CD8-positive, alpha-beta T cell (primary cell): ENCODE measurements at regions of chr14 and their contacts with region 1.

Region 1: GRCh38 chr14:74493343-74494261 is at the start of gene ISCA2:
- DNase-seq: peak; percentile 97 to 100 (median 99)
- ATAC-seq: peak; percentile 91
- H3K4me3 ChIP-seq: peak within 1 kb of the TSS; percentile 78 to 90
- H3K4me3 Mint-ChIP-seq: no peak within 1 kb of the TSS
- H3K27ac ChIP-seq: peak within 1 kb of the TSS; percentile 80 to 81
- H3K27ac Mint-ChIP-seq: peak within 1 kb of the TSS; percentile 92
- H3K4me1 ChIP-seq: peaks cover 32% of the 10 kb centered on the region
- H3K4me1 Mint-ChIP-seq: peaks cover 33% of the 10 kb centered on the region
- H3K27me3 ChIP-seq: no peaks in the 10 kb centered on the region
- H3K27me3 Mint-ChIP-seq: no peaks in the 10 kb centered on the region
- CTCF ChIP-seq: no peak
- total RNA-seq, gene ISCA2: 18.6 to 24.0 TPM

Region 2: GRCh38 chr14:74084277-74085046 is 409.1 kb before region 1 on chr14 and contains the starts of genes ALDH6A1 and LIN52:
- CTCF ChIA-PET with region 1: no interaction called
- POLR2A ChIA-PET with region 1: no interaction called
- intact Hi-C with region 1: loop called (anchors 1 kb)
- DNase-seq: peak; percentile 100
- ATAC-seq: peak; percentile 85
- H3K4me3 ChIP-seq: peak within 1 kb of the TSS; percentile 80 to 90
- H3K4me3 Mint-ChIP-seq: peak within 1 kb of the TSS; percentile 98
- H3K27ac ChIP-seq: peak within 1 kb of the TSS; percentile 70 to 73
- H3K27ac Mint-ChIP-seq: peak within 1 kb of the TSS; percentile 96
- H3K4me1 ChIP-seq: peaks cover 19% of the 10 kb centered on the region
- H3K4me1 Mint-ChIP-seq: peaks cover 33% of the 10 kb centered on the region
- H3K27me3 ChIP-seq: no peaks in the 10 kb centered on the region
- H3K27me3 Mint-ChIP-seq: no peaks in the 10 kb centered on the region
- CTCF ChIP-seq: no peak
- total RNA-seq, gene ALDH6A1: 3.8 to 4.0 TPM
- total RNA-seq, gene LIN52: 6.1 to 6.8 TPM

Region 3: DNA sequence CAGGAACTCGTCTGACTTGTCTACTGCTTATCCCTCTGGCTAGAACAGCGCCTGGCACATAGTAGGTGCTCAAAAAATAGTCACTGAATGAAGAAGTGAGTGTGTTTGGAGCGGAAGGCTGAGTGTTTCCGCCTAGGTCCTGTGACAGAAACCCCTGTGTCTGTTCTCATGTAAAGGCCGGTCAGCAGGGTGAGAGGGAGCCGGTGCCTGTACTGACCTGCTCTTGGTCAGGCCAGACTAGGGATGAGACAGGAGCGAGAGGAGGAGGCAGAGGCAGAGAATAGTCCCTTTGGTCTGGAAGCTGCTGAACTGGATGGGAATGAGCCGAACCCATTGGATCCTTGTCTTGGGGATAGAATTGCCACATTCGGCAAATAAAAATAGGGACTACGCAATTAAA is 124.8 kb before region 1 on chr14:
- CTCF ChIA-PET with region 1: no interaction called
- POLR2A ChIA-PET with region 1: no interaction called
- intact Hi-C with region 1: no loop called
- DNase-seq: no peak
- ATAC-seq: no peak
- H3K4me3 ChIP-seq: no peak overlapping the region
- H3K4me3 Mint-ChIP-seq: no peak overlapping the region
- H3K27ac ChIP-seq: no peak overlapping the region
- H3K27ac Mint-ChIP-seq: no peak overlapping the region
- H3K4me1 ChIP-seq: no peaks in the 10 kb centered on the region
- H3K4me1 Mint-ChIP-seq: no peaks in the 10 kb centered on the region
- H3K27me3 ChIP-seq: no peaks in the 10 kb centered on the region
- H3K27me3 Mint-ChIP-seq: peaks cover 10% of the 10 kb centered on the region
- CTCF ChIP-seq: no peak

Region 4: DNA sequence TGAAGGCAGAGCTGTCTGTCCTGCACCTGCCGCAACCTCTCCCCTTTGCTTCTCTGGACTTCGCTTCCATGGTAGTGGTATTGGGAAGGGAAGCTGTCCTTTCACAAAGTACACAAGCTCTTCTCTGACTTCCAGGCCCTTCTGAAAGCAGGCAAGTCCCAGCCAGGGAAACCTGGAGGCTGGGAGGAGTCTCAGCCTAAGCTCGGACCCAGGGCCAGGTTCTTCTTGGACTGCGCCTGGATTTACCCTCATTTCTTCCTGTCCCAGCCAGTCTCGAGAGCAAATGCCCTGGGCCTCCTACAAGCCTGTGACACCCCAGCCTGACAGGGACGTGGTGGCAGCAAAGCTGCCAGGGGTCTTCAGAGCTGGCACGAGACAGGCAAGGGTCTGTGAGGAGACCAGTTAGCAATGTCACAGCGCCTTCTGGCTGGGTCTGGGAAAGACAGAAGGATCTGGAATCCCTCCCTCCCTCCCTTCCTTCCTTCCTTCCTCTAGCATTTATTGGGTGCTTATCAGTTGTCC is 22.4 kb after region 1 on chr14:
- CTCF ChIA-PET with region 1: no interaction called
- POLR2A ChIA-PET with region 1: no interaction called
- intact Hi-C with region 1: loop called in 1 of 2 experiments (anchors 1 kb)
- DNase-seq: no peak
- ATAC-seq: no peak
- H3K4me3 ChIP-seq: no peak overlapping the region
- H3K4me3 Mint-ChIP-seq: no peak overlapping the region
- H3K27ac ChIP-seq: no peak overlapping the region
- H3K27ac Mint-ChIP-seq: no peak overlapping the region
- H3K4me1 ChIP-seq: peaks cover 9% of the 10 kb centered on the region
- H3K4me1 Mint-ChIP-seq: peaks cover 8% of the 10 kb centered on the region
- H3K27me3 ChIP-seq: no peaks in the 10 kb centered on the region
- H3K27me3 Mint-ChIP-seq: peaks cover 16% of the 10 kb centered on the region
- CTCF ChIP-seq: no peak

Region 5: DNA sequence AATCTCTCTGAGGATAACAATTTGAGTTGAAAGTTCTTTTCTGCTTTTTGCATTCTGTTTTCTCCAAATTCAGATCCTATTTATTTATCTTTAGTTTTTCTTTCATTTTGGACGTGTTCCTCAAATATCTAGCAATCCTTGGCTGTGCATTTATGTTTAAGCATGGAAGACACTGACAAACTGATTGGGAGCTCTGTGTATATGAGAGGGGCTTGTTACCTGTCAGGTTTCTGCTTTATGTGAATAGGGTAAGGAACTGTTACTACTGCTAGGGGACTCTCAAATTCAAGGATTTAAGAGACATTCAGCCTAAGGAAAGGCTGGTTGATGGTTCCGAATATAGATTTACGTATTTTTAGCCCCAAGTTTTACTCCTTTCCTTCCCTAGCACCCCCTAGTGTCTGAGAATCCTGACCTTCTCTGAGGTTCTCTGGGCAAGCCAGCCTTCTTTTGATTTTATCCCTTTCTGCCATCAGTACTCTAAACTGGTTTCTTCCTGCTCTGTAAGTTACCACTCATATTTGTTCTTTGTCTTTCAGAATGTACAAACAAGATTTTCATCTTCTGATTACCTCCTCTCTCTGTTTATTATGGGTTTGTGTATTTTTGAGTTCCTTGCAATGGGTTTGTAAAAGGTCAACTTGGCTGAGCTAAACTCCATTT is 300.0 kb after region 1 on chr14:
- CTCF ChIA-PET with region 1: no interaction called
- POLR2A ChIA-PET with region 1: no interaction called
- intact Hi-C with region 1: loop called in 1 of 2 experiments (anchors 10 kb)
- DNase-seq: peak in 2 of 9 experiments; percentile 36 to 59
- ATAC-seq: peak; percentile 51
- H3K4me3 ChIP-seq: peak overlapping the region in 1 of 2 experiments; percentile 9
- H3K4me3 Mint-ChIP-seq: peak overlapping the region; percentile 70
- H3K27ac ChIP-seq: peak overlapping the region in 1 of 2 experiments; percentile 3
- H3K27ac Mint-ChIP-seq: peak overlapping the region; percentile 89
- H3K4me1 ChIP-seq: peaks cover 28% of the 10 kb centered on the region
- H3K4me1 Mint-ChIP-seq: peaks cover 47% of the 10 kb centered on the region
- H3K27me3 ChIP-seq: no peaks in the 10 kb centered on the region
- H3K27me3 Mint-ChIP-seq: no peaks in the 10 kb centered on the region
- CTCF ChIP-seq: peak; percentile 35

Region 6: GRCh38 chr14:75126679-75127473 is 633.3 kb after region 1 on chr14 and contains the start of gene NEK9:
- CTCF ChIA-PET with region 1: no interaction called
- POLR2A ChIA-PET with region 1: no interaction called
- intact Hi-C with region 1: loop called in 1 of 2 experiments (anchors 10 kb)
- DNase-seq: peak; percentile 77 to 93 (median 89)
- ATAC-seq: peak; percentile 82
- H3K4me3 ChIP-seq: peak within 1 kb of the TSS; percentile 87 to 95
- H3K4me3 Mint-ChIP-seq: peak within 1 kb of the TSS; percentile 95
- H3K27ac ChIP-seq: peak within 1 kb of the TSS; percentile 87 to 92
- H3K27ac Mint-ChIP-seq: peak within 1 kb of the TSS; percentile 98
- H3K4me1 ChIP-seq: peaks cover 23% of the 10 kb centered on the region
- H3K4me1 Mint-ChIP-seq: peaks cover 46% of the 10 kb centered on the region
- H3K27me3 ChIP-seq: no peaks in the 10 kb centered on the region
- H3K27me3 Mint-ChIP-seq: no peaks in the 10 kb centered on the region
- CTCF ChIP-seq: no peak
- total RNA-seq, gene NEK9: 40.7 to 42.9 TPM

Region 7: GRCh38 chr14:76151398-76152339 is 1658.1 kb after region 1 on chr14 and contains the start of gene GPATCH2L:
- CTCF ChIA-PET with region 1: no interaction called
- POLR2A ChIA-PET with region 1: no interaction called
- intact Hi-C with region 1: loop called in 1 of 2 experiments (anchors 10 kb)
- DNase-seq: peak; percentile 95 to 98 (median 97)
- ATAC-seq: peak; percentile 87
- H3K4me3 ChIP-seq: peak within 1 kb of the TSS; percentile 86 to 99
- H3K4me3 Mint-ChIP-seq: peak within 1 kb of the TSS; percentile 93
- H3K27ac ChIP-seq: peak within 1 kb of the TSS; percentile 85 to 98
- H3K27ac Mint-ChIP-seq: peak within 1 kb of the TSS; percentile 95
- H3K4me1 ChIP-seq: peaks cover 47% of the 10 kb centered on the region
- H3K4me1 Mint-ChIP-seq: peaks cover 54% of the 10 kb centered on the region
- H3K27me3 ChIP-seq: no peaks in the 10 kb centered on the region
- H3K27me3 Mint-ChIP-seq: no peaks in the 10 kb centered on the region
- CTCF ChIP-seq: no peak
- total RNA-seq, gene GPATCH2L: 74.4 to 78.1 TPM